MCF 10A (cell line): ENCODE measurements at regions of chr4 and their contacts with region 1.

Region 1: DNA sequence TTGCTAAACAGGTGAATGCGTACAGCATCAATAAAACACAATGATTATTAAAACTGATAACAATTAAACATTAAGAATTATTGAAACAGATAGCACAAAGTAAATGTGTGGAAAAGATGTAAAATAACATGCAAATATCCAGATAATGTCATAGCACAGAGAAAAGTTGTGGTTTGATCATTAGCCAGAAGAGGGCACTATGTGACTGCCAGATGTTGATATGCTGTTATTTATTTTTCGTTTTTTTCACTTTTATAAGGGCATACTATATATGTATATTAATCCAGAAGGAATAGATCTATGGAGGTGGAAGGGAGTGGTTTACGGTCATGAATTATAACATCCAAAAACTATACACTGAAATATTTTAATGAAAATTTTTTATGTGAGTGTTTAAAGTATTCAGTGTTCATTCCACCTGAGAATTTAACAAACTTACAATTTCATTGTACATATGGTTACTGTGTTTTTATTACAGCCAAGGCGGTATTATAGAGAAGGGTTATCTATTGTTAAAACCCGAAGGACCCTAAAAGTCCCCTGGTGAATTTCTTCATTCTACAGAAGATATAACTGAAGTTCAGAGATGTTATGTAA is 211.9 kb upstream of the UGT8 start:
- DNase-seq: peak; percentile 56
- H3K4me3 Mint-ChIP-seq: no peak overlapping the region
- H3K27ac Mint-ChIP-seq: no peak overlapping the region
- H3K4me1 Mint-ChIP-seq: no peaks in the 10 kb centered on the region
- H3K27me3 Mint-ChIP-seq: peaks cover 36% of the 10 kb centered on the region
- CTCF ChIP-seq: peak; percentile 70

Region 2: DNA sequence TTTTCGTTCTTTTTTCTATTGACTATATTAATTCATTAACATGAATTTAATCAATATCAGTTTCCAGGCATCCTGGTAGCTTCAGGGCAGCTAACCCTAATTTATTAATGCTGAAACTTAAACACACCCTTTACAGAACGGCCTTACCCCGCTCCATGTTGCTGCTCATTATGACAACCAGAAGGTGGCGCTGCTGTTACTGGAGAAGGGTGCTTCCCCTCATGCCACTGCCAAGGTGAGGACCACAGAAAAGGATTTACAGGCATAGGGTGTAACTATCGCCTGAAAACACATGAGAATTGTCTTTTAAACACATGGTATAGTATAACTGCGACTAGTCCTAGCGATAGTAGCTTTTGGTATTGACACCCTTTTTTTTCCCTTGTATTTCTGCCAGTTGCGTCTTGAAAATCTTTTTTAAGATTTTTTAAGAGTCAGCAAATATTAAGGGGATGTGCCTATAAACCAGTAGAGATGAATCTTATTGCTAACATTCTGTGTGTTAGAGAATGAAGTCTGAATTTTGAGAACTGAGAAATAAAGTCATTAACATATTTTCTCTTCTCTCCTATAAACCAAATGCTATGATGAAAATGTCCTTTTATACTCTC is 1108.3 kb before region 1 on chr4:
- CTCF ChIA-PET with region 1: no interaction called
- POLR2A ChIA-PET with region 1: no interaction called
- intact Hi-C with region 1: loop called (anchors 2 kb)
- DNase-seq: peak; percentile 90
- H3K4me3 Mint-ChIP-seq: no peak overlapping the region
- H3K27ac Mint-ChIP-seq: no peak overlapping the region
- H3K4me1 Mint-ChIP-seq: no peaks in the 10 kb centered on the region
- H3K27me3 Mint-ChIP-seq: no peaks in the 10 kb centered on the region
- CTCF ChIP-seq: peak; percentile 80

Region 3: GRCh38 chr4:113547487-113548042 is 839.2 kb before region 1 on chr4:
- CTCF ChIA-PET with region 1: interaction called, 3 read pairs
- POLR2A ChIA-PET with region 1: no interaction called
- intact Hi-C with region 1: loop called (anchors 2 kb)
- DNase-seq: peak; percentile 97
- H3K4me3 Mint-ChIP-seq: no peak overlapping the region
- H3K27ac Mint-ChIP-seq: no peak overlapping the region
- H3K4me1 Mint-ChIP-seq: peaks cover 8% of the 10 kb centered on the region
- H3K27me3 Mint-ChIP-seq: no peaks in the 10 kb centered on the region
- CTCF ChIP-seq: peak; percentile 93

Region 4: GRCh38 chr4:114400531-114400930 is 13.8 kb after region 1 on chr4:
- CTCF ChIA-PET with region 1: interaction called, 11 read pairs
- POLR2A ChIA-PET with region 1: no interaction called
- intact Hi-C with region 1: no loop called
- DNase-seq: peak; percentile 26
- H3K4me3 Mint-ChIP-seq: no peak overlapping the region
- H3K27ac Mint-ChIP-seq: no peak overlapping the region
- H3K4me1 Mint-ChIP-seq: no peaks in the 10 kb centered on the region
- H3K27me3 Mint-ChIP-seq: peaks cover 17% of the 10 kb centered on the region
- CTCF ChIP-seq: no peak

Region 5: DNA sequence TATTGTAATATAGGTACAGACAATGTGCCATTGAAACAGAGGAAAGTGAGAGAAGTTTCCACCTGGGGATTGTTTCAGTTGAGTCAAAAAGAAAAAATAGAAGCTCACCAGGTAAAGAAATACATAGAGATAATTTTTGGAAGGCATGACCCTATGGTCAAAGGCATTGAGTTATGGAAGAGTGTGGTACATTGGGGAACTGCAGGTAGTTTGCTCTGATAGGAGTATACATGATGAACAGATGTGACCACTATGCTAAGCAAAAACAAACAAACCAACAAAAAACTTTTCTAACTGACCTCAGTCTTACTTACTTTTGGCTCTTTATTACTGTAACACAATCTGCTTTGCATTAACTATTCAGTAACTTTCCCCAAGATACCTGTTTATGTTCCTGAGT is 297.7 kb after region 1 on chr4:
- CTCF ChIA-PET with region 1: interaction called, 12 read pairs
- POLR2A ChIA-PET with region 1: no interaction called
- intact Hi-C with region 1: no loop called
- DNase-seq: no peak
- H3K4me3 Mint-ChIP-seq: no peak overlapping the region
- H3K27ac Mint-ChIP-seq: no peak overlapping the region
- H3K4me1 Mint-ChIP-seq: no peaks in the 10 kb centered on the region
- H3K27me3 Mint-ChIP-seq: peaks cover 63% of the 10 kb centered on the region
- CTCF ChIP-seq: no peak

Region 6: GRCh38 chr4:115851918-115852766 is 1465.4 kb after region 1 on chr4:
- CTCF ChIA-PET with region 1: no interaction called
- POLR2A ChIA-PET with region 1: no interaction called
- intact Hi-C with region 1: loop called (anchors 10 kb)
- DNase-seq: peak; percentile 71
- H3K4me3 Mint-ChIP-seq: no peak overlapping the region
- H3K27ac Mint-ChIP-seq: no peak overlapping the region
- H3K4me1 Mint-ChIP-seq: no peaks in the 10 kb centered on the region
- H3K27me3 Mint-ChIP-seq: peaks cover 25% of the 10 kb centered on the region
- CTCF ChIP-seq: peak; percentile 45